Psoas muscle (tissue), 8 donors: ENCODE measurements at regions of chr12 and their contacts with region 1.

Region 1: DNA sequence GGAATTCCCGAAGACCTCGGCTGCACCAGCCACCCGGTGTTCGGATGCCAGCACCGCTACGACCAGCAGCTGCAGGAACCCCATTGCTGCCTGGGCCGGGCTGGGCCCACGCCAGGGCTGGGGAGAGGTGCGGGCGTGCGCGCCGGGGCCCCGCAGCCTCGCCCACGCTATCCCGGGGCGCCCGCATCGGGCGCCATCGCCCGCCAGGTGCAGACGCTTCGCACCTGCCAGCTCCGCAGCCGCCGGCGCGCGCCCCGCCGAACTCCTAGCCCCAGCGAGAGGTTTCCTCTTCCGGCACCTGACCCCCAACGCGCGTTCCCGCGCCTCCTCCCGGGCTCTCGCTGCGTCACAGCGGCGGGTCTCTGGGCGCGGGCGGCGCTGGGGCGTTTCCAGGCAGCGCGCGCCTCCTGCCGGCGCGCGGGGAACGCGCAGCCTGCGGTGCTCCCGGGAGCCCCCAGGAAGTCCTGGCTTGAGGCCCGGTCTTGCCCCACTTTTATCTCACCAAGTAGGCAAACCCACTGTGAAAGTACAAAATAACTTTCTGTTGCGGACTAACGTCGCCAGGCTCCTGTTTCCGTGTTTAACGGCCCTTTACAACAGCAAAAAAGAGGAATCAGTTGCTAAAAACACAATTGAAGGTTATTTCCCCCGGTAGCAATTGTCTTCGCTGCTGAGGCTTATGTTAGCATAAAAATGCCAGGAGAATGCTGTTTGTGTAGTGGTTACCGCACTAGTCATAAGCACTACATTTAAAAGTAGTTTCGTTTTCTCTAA is at the start of gene TM7SF3:
- DNase-seq: peak; percentile 94 to 97
- ATAC-seq: peak; percentile 97 to 98 (median 97)
- H3K4me3 ChIP-seq: peak within 1 kb of the TSS; percentile 86
- H3K27ac ChIP-seq: peak within 1 kb of the TSS; percentile 90
- H3K4me1 ChIP-seq: peaks cover 19% of the 10 kb centered on the region
- H3K27me3 ChIP-seq: no peaks in the 10 kb centered on the region
- CTCF ChIP-seq: peak; percentile 96
- total RNA-seq, gene TM7SF3: 6.0 to 16.5 (median 10.2) TPM

Region 2: DNA sequence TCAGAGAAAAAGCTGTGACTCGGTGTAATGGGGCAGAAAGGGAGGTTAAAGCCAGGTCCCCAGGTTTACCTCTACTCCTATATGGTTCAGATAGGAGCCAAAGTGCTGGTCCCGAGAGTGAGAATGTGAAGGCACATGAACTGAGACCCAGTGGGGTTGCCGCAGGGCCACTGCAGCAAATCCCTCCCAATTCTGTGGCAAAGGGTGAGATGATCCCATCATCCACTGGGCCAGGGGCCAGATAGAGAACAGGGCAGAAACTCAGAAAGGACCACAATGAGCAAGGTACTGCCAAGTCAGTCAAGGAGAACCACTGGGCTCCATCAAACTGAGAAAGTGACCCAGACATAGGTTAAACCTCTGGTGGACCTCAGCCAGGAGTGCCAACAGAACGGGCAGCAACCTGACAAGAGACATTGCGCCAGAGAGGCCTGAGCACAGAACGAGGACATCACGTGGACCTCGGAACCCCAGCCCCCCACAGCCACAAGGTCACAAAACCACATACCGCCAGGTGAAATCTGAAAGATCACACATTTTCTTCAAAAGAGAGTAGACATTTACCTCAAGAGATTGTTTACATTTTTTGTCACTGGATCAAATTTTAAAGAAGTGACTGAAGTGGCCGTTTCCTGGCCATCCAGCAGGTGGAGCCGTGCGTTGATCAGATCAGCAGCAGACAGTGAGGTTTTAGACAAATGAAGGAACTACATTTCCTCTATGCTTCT is 160.8 kb before region 1 on chr12:
- intact Hi-C with region 1: loop called in 1 of 2 experiments (anchors 10 kb)
- DNase-seq: peak; percentile 61 to 76
- ATAC-seq: peak; percentile 60 to 94 (median 79)
- H3K4me3 ChIP-seq: no peak overlapping the region
- H3K27ac ChIP-seq: no peak overlapping the region
- H3K4me1 ChIP-seq: no peaks in the 10 kb centered on the region
- H3K27me3 ChIP-seq: no peaks in the 10 kb centered on the region
- CTCF ChIP-seq: peak; percentile 82

Region 3: GRCh38 chr12:26937875-26938700 is 76.2 kb before region 1 on chr12 and contains the starts of genes FGFR1OP2 and INTS13:
- intact Hi-C with region 1: loop called (anchors 2 kb)
- DNase-seq: peak; percentile 99 to 100
- ATAC-seq: peak; percentile 95 to 97 (median 96)
- H3K4me3 ChIP-seq: peak within 1 kb of the TSS; percentile 76
- H3K27ac ChIP-seq: peak within 1 kb of the TSS; percentile 90
- H3K4me1 ChIP-seq: peaks cover 53% of the 10 kb centered on the region
- H3K27me3 ChIP-seq: no peaks in the 10 kb centered on the region
- CTCF ChIP-seq: no peak
- total RNA-seq, gene FGFR1OP2: 26.0 to 31.3 (median 28.4) TPM
- total RNA-seq, gene INTS13: 21.3 to 29.6 (median 23.7) TPM

Region 4: GRCh38 chr12:27048822-27049752 is 34.8 kb after region 1 on chr12:
- intact Hi-C with region 1: no loop called
- DNase-seq: no peak
- ATAC-seq: no peak
- H3K4me3 ChIP-seq: no peak overlapping the region
- H3K27ac ChIP-seq: no peak overlapping the region
- H3K4me1 ChIP-seq: no peaks in the 10 kb centered on the region
- H3K27me3 ChIP-seq: no peaks in the 10 kb centered on the region
- CTCF ChIP-seq: no peak

Region 5: GRCh38 chr12:27243804-27244683 is 229.8 kb after region 1 on chr12 and contains the start of gene STK38L:
- intact Hi-C with region 1: loop called in 1 of 2 experiments (anchors 5 kb)
- DNase-seq: peak; percentile 98
- ATAC-seq: peak; percentile 98 to 99 (median 98)
- H3K4me3 ChIP-seq: peak within 1 kb of the TSS; percentile 99
- H3K27ac ChIP-seq: peak within 1 kb of the TSS; percentile 81
- H3K4me1 ChIP-seq: peaks cover 13% of the 10 kb centered on the region
- H3K27me3 ChIP-seq: no peaks in the 10 kb centered on the region
- CTCF ChIP-seq: no peak
- total RNA-seq, gene STK38L: 16.3 to 21.2 (median 18.6) TPM

Region 6: GRCh38 chr12:27305673-27306456 is 291.6 kb after region 1 on chr12:
- intact Hi-C with region 1: loop called (anchors 2 to 10 kb)
- DNase-seq: no peak
- ATAC-seq: no peak
- H3K4me3 ChIP-seq: no peak overlapping the region
- H3K27ac ChIP-seq: no peak overlapping the region
- H3K4me1 ChIP-seq: no peaks in the 10 kb centered on the region
- H3K27me3 ChIP-seq: no peaks in the 10 kb centered on the region
- CTCF ChIP-seq: peak; percentile 67

Region 7: GRCh38 chr12:27319409-27319808 is 305.1 kb after region 1 on chr12:
- intact Hi-C with region 1: loop called in 1 of 2 experiments (anchors 10 kb)
- DNase-seq: no peak
- ATAC-seq: no peak
- H3K4me3 ChIP-seq: no peak overlapping the region
- H3K27ac ChIP-seq: no peak overlapping the region
- H3K4me1 ChIP-seq: no peaks in the 10 kb centered on the region
- H3K27me3 ChIP-seq: no peaks in the 10 kb centered on the region
- CTCF ChIP-seq: no peak